Calu3 (cell line): ENCODE measurements at regions of chr10 and their contacts with region 1.

Region 1: GRCh38 chr10:33330543-33331378 is 3.7 kb downstream of the NRP1 start:
- DNase-seq: peak; percentile 87
- H3K4me3 Mint-ChIP-seq: peak overlapping the region; percentile 85
- H3K27ac Mint-ChIP-seq: peak overlapping the region; percentile 90
- H3K4me1 Mint-ChIP-seq: peaks cover 38% of the 10 kb centered on the region
- H3K27me3 Mint-ChIP-seq: no peaks in the 10 kb centered on the region
- CTCF ChIP-seq: peak; percentile 73

Region 2: DNA sequence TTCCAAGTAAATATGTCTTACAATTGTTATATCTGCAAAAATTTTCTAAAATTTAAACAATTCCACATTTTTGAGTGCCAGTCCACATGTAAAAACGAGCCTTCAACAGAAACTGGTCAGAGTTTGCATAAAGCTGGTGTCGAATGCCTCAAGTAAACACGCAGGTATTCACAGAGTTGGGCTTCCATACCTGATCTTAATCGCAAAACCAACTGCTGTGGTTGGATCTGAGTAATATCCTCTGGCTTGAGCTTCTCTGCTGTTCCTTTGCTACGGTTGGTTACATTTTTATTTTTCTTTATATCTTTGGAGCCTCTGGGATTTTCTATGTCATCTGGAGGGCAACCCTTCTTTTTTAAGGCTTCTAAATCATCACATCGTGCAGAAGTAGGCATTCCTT is 401.1 kb before region 1 on chr10:
- CTCF ChIA-PET with region 1: no interaction called
- intact Hi-C with region 1: no loop called
- DNase-seq: no peak
- H3K4me3 Mint-ChIP-seq: no peak overlapping the region
- H3K27ac Mint-ChIP-seq: no peak overlapping the region
- H3K4me1 Mint-ChIP-seq: peaks cover 34% of the 10 kb centered on the region
- H3K27me3 Mint-ChIP-seq: no peaks in the 10 kb centered on the region
- CTCF ChIP-seq: no peak

Region 3: GRCh38 chr10:33193701-33194521 is 136.8 kb before region 1 on chr10:
- CTCF ChIA-PET with region 1: interaction called, 3 read pairs
- intact Hi-C with region 1: loop called (anchors 5 kb)
- DNase-seq: peak; percentile 32
- H3K4me3 Mint-ChIP-seq: no peak overlapping the region
- H3K27ac Mint-ChIP-seq: peak overlapping the region; percentile 5
- H3K4me1 Mint-ChIP-seq: peaks cover 54% of the 10 kb centered on the region
- H3K27me3 Mint-ChIP-seq: no peaks in the 10 kb centered on the region
- CTCF ChIP-seq: peak; percentile 5

Region 4: GRCh38 chr10:33609546-33609945 is 278.8 kb after region 1 on chr10:
- CTCF ChIA-PET with region 1: no interaction called
- intact Hi-C with region 1: loop called (anchors 2 kb)
- DNase-seq: peak; percentile 25
- H3K4me3 Mint-ChIP-seq: peak overlapping the region; percentile 36
- H3K27ac Mint-ChIP-seq: peak overlapping the region; percentile 48
- H3K4me1 Mint-ChIP-seq: peaks cover 30% of the 10 kb centered on the region
- H3K27me3 Mint-ChIP-seq: no peaks in the 10 kb centered on the region
- CTCF ChIP-seq: no peak

Region 5: DNA sequence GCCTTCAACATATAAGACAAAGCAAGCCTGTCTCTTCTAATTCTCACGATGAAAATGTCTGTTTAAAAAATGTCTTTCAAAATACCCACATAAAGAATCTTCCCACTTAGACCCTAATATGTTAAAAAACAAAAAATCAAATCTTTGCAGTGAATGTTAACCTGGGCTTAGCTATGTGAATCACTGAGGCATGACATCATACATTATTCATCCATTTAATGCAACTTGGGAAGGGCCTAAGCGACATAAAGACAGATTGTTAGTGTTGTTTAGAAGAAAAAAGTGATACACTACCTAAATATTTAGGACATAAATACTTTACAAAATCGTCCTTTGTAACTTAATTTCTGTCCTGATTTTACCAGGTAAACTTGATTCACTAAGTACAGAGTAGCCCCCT is 652.2 kb after region 1 on chr10:
- CTCF ChIA-PET with region 1: no interaction called
- intact Hi-C with region 1: loop called (anchors 5 kb)
- DNase-seq: no peak
- H3K4me3 Mint-ChIP-seq: no peak overlapping the region
- H3K27ac Mint-ChIP-seq: no peak overlapping the region
- H3K4me1 Mint-ChIP-seq: peaks cover 23% of the 10 kb centered on the region
- H3K27me3 Mint-ChIP-seq: no peaks in the 10 kb centered on the region
- CTCF ChIP-seq: no peak

Region 6: GRCh38 chr10:34224639-34225038 is 893.9 kb after region 1 on chr10:
- CTCF ChIA-PET with region 1: no interaction called
- intact Hi-C with region 1: loop called (anchors 5 kb)
- DNase-seq: no peak
- H3K4me3 Mint-ChIP-seq: no peak overlapping the region
- H3K27ac Mint-ChIP-seq: peak overlapping the region; percentile 61
- H3K4me1 Mint-ChIP-seq: peaks cover 35% of the 10 kb centered on the region
- H3K27me3 Mint-ChIP-seq: no peaks in the 10 kb centered on the region
- CTCF ChIP-seq: no peak